Body of pancreas (tissue), 4 donors: ENCODE measurements at regions of chr5 and their contacts with region 1.

Region 1: GRCh38 chr5:159106569-159107282 is 7.0 kb upstream of the EBF1 start:
- DNase-seq: peak; percentile 61 to 81 (median 74)
- ATAC-seq: peak; percentile 76
- H3K4me3 ChIP-seq: no peak overlapping the region
- H3K27ac ChIP-seq: no peak overlapping the region
- H3K4me1 ChIP-seq: peaks cover 6% of the 10 kb centered on the region
- H3K27me3 ChIP-seq: peaks cover 0 to 3% of the 10 kb centered on the region in 2 donors
- CTCF ChIP-seq: peak; percentile 66 to 95 (median 81)
- POLR2A ChIP-seq: no peak

Region 2: GRCh38 chr5:158084292-158084691 is 1022.4 kb before region 1 on chr5:
- intact Hi-C with region 1: loop called (anchors 10 kb)
- DNase-seq: no peak
- ATAC-seq: peak; percentile 18
- H3K4me3 ChIP-seq: no peak overlapping the region
- H3K27ac ChIP-seq: no peak overlapping the region
- H3K4me1 ChIP-seq: no peaks in the 10 kb centered on the region
- H3K27me3 ChIP-seq: no peaks in the 10 kb centered on the region
- CTCF ChIP-seq: no peak
- POLR2A ChIP-seq: no peak

Region 3: DNA sequence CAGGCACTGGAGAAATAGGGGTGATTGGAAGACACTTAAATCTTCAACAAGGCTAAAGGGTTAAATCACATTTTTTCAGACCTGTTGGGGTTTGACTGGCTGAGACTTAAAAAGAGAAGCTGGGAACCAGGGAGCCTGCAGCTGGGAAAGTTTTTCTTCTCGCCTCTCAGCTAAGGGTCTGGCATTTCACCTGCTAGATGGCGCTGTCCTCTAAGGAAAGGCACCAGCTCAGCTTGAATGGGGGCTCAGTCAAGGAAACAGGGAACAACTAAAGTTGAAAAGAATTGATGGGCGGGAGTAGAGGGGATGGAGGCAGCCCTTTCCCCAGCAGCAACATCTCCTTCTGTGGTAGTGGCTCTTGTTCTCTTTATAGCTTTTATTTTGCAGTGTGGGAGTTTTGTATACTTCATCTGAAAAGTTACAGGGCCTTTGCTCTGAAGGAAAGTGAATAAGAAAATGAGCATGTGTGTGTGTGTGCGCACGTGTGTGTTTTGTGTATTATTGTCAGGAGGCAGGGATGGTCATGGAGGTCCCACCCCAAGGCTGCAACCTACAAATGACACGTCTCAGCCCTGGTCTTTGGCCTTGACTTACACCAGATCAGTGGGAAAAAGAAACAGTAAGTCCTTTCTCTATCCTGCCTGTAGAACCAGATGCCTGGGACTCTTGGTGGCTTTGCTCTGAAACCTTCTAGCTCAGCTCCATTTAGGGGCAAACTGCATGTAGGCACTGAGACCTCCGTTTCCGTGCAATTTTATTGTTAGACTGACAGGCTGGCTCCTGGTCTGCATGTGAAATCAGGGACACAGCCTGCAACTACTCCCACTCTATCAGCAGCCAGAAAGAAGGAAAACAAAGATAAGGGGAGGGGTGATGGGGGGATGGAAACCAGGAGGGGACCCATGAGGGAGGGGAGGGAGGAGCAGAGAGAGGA is 931.5 kb before region 1 on chr5:
- intact Hi-C with region 1: loop called (anchors 5 kb)
- DNase-seq: peak; percentile 61 to 72 (median 70)
- ATAC-seq: peak; percentile 76
- H3K4me3 ChIP-seq: no peak overlapping the region
- H3K27ac ChIP-seq: no peak overlapping the region
- H3K4me1 ChIP-seq: peaks cover 9% of the 10 kb centered on the region
- H3K27me3 ChIP-seq: no peaks in the 10 kb centered on the region
- CTCF ChIP-seq: peak; percentile 45 to 87 (median 73)
- POLR2A ChIP-seq: no peak

Region 4: DNA sequence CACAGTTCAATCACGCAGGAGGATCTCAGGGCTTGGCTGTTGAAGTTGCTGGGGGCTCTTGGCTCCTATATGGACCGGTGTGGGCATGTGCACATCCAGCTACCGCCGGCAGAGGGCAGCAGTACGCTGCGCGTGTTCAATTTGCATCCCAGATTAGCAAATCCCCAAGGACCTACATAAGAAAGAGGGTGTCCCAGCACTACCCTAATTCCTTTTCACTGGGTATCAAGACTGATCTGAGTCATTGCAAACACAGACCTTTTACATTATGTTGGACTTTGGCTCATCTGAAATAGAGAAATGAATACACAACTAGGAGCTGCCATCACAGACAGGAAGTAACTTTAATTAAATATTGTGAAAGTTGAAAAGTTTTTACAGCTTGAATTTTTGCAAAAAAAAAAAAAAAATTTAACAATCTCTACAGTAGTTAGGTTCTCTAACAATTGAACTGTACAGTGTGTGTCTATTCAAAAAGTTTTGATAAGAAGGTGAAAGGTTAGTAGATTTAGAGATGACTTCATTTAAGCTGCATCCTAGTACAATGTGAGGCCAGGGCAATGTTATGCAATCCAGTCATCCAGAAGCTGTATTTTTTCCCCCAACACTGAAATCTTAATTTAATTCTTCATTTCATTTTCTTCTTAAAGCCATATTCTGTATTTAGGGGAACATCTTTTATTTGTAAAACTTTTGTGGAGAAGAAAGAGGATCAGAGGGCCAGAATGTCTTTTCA is 411.0 kb before region 1 on chr5:
- intact Hi-C with region 1: loop called (anchors 2 kb)
- DNase-seq: peak; percentile 59 to 78 (median 68)
- ATAC-seq: peak; percentile 82
- H3K4me3 ChIP-seq: no peak overlapping the region
- H3K27ac ChIP-seq: no peak overlapping the region
- H3K4me1 ChIP-seq: peaks cover 6% of the 10 kb centered on the region
- H3K27me3 ChIP-seq: peaks cover 0 to 3% of the 10 kb centered on the region in 2 donors
- CTCF ChIP-seq: peak; percentile 80 to 98 (median 91)
- POLR2A ChIP-seq: no peak

Region 5: GRCh38 chr5:158953929-158954534 is 152.7 kb before region 1 on chr5:
- intact Hi-C with region 1: no loop called
- DNase-seq: no peak
- ATAC-seq: no peak
- H3K4me3 ChIP-seq: no peak overlapping the region
- H3K27ac ChIP-seq: no peak overlapping the region
- H3K4me1 ChIP-seq: no peaks in the 10 kb centered on the region
- H3K27me3 ChIP-seq: no peaks in the 10 kb centered on the region
- CTCF ChIP-seq: no peak
- POLR2A ChIP-seq: no peak

Region 6: GRCh38 chr5:158979749-158980521 is 126.8 kb before region 1 on chr5:
- intact Hi-C with region 1: no loop called
- DNase-seq: peak; percentile 34 to 69 (median 48)
- ATAC-seq: peak; percentile 88
- H3K4me3 ChIP-seq: no peak overlapping the region
- H3K27ac ChIP-seq: peak overlapping the region in 2 of 4 donors; percentile 45 to 73
- H3K4me1 ChIP-seq: peaks cover 19% of the 10 kb centered on the region
- H3K27me3 ChIP-seq: no peaks in the 10 kb centered on the region
- CTCF ChIP-seq: no peak
- POLR2A ChIP-seq: no peak

Region 7: DNA sequence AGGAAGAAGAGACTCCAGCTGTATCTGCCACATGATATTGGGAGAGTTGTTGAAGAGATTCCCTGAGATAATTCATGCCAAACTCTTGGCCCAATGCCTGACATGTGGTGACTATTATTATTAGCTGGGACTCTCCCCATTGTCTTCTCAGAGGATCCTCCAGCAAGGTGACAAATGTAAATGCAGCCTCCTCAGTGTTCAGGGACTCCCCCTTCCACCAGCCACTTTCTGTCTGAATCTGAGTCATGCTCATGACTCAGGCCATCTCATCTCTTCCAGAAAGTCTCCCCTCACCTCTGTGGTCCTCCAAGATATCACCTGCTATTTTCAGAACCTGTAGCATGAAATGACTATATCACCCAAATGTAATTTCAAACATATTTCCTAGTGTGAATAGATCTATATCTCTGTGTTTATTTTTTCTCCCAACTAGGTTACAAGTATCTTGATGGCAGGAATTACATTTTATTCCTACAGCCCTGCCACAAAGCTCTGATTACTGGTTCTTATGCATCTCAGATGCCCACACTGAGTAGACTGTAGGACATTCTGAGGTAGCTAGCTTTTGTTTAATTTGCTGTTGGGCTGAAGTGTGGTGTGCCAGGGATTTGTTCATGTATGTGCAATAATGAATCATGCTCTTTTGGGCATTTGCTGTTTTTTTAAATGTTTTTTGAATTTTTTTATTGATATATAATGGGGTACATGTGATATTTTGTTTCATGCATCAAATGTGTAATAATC is 350.2 kb after region 1 on chr5:
- intact Hi-C with region 1: no loop called
- DNase-seq: no peak
- ATAC-seq: no peak
- H3K4me3 ChIP-seq: no peak overlapping the region
- H3K27ac ChIP-seq: no peak overlapping the region
- H3K4me1 ChIP-seq: no peaks in the 10 kb centered on the region
- H3K27me3 ChIP-seq: no peaks in the 10 kb centered on the region
- CTCF ChIP-seq: no peak
- POLR2A ChIP-seq: no peak